ENCODE measurements at regions of chr1 and their contacts with region 1.

Region 1: GRCh38 chr1:75293270-75293669 is 159.1 kb downstream of the LHX8 start:
- DNase-seq: no peak
- H3K4me3 ChIP-seq: no peak overlapping the region
- H3K27ac ChIP-seq: no peak overlapping the region
- H3K4me1 ChIP-seq: no peaks in the 10 kb centered on the region
- H3K27me3 ChIP-seq: no peaks in the 10 kb centered on the region
- CTCF ChIP-seq: no peak
- EP300 ChIP-seq: no peak
- POLR2A ChIP-seq: no peak

Region 2: DNA sequence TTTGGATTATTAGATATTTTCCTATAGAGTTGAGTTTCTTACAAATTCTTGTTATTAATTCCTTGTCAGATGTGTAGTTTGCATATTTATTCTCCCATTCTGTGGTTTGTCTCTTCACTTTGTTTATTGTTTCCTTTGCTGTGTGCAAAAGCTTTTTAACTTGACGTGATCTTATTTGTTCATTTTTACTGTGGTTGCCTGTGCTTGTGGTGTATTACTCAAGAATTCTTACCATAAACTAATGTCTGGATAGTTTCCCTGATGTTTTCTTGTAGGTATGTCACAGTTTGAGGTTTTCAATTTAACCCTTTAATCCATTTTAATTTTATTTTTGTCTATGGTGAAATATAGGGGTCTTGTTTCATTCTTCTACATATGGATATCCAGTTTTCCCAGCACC is 231.2 kb before region 1 on chr1:
- intact Hi-C with region 1: no loop called
- DNase-seq: no peak
- H3K4me3 ChIP-seq: no peak overlapping the region
- H3K27ac ChIP-seq: no peak overlapping the region
- H3K4me1 ChIP-seq: no peaks in the 10 kb centered on the region
- H3K27me3 ChIP-seq: no peaks in the 10 kb centered on the region
- CTCF ChIP-seq: no peak
- EP300 ChIP-seq: no peak
- POLR2A ChIP-seq: no peak

Region 3: GRCh38 chr1:75245239-75245638 is 48.0 kb before region 1 on chr1:
- intact Hi-C with region 1: no loop called
- DNase-seq: no peak
- H3K4me3 ChIP-seq: no peak overlapping the region
- H3K27ac ChIP-seq: no peak overlapping the region
- H3K4me1 ChIP-seq: no peaks in the 10 kb centered on the region
- H3K27me3 ChIP-seq: no peaks in the 10 kb centered on the region
- CTCF ChIP-seq: no peak
- EP300 ChIP-seq: no peak
- POLR2A ChIP-seq: no peak

Region 4: DNA sequence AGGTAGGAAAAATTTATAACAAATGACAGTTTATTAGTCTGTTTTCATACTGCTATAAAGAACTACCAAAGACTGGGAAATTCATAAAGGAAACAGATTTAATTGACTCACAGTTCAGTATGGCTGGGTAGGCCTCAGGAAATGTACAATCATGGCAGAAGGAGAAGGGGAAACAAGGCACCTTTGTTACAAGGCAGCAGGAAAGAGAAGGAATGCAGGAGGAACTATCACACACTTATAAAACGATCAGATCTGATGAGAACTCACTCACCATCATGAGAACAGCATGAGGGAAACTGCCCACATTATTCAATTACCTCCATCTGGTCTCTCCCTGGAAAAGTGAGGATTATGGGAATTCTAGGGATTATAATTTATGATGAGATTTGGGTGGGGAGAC is 577.7 kb after region 1 on chr1:
- intact Hi-C with region 1: loop called in 1 of 4 experiments (anchors 10 kb)
- DNase-seq: no peak
- H3K4me3 ChIP-seq: no peak overlapping the region
- H3K27ac ChIP-seq: no peak overlapping the region
- H3K4me1 ChIP-seq: no peaks in the 10 kb centered on the region
- H3K27me3 ChIP-seq: no peaks in the 10 kb centered on the region
- CTCF ChIP-seq: no peak
- EP300 ChIP-seq: no peak
- POLR2A ChIP-seq: no peak

Measured in ovary (tissue), 10 donors.